Astrocyte of the cerebellum (primary cell): ENCODE measurements at regions of chr2 and their contacts with region 1.

Region 1: DNA sequence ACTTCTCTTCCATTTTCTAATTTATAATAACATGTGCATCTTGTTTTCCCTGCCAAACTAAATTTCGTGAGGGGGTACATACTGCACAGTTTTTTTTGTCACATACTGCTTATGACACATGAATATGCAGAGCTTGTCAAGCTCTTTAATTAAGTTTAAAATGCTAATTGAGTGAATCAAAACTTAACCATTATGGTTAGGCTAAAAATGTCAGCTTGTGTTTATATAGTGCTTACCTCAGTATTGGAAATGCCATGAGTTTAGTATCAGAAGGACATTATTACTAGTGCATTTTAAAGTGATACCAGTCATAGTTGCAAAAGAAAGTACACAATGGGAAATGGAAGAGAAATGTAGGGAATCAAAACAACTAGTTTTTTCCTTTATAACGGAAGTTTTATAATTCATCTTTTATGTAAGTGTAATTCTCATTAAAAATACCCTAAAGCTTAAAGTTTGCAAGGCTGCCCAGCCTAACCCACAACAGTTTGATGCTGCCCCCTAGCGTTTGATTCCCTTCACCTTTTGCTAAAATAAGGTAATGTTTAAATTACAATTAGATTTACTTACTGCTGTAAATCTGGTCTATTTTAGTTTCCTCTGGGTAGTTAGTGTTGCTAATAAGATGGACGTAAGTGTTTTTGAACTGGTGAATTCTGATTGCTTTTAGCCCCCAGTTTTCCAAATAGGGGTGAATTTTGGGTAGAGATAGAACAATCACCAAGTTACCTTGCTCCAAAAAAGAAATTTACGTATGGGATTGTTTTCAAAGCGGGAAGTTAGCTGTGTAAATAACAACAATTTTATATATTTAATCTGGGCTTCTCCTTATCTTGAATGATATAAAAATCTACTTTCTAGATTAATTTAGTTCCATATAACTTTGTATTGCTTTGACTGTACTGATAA is 3.2 kb downstream of the SLC39A10 start:
- DNase-seq: peak; percentile 78
- H3K4me3 ChIP-seq: peak overlapping the region; percentile 90
- CTCF ChIP-seq: peak; percentile 75

Region 2: DNA sequence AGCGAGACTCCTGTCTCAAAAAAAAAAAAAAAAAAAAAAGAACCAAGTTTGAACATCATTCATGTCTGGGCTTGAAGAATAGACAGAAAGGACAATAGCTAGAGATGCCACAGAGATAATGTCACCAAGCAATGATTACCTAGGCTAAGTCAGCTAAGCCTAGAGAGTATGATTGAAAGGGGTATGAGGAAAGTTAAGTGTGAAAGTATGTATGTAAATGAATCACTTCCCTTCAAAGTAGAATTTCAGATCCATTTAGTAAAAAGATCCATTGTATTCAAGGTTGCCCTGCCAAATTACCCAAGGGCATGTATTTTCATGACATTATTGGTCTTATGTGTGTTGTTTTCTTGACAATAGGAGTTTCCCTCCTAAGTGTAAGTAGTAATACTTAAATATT is 37.3 kb before region 1 on chr2:
- in situ Hi-C with region 1: no loop called
- DNase-seq: no peak
- H3K4me3 ChIP-seq: no peak overlapping the region
- CTCF ChIP-seq: no peak

Region 3: DNA sequence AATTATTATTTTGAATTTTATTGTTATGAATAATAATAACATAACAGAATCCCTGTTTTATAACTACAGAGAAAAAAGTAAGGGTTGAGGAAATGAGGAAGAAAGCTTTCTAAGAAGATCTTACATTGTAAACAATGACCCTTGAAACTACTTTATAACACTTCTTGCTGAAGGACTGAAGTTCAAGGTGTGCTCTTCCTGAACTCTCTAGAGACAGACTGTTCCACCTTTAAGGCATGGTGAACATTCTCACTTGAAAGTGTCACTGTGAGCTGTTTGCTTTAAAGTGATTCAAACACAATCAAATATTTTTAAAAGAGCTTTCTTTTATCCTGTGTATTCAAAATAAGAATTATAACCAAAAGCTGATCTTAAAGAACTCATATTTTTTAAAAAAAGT is 276.9 kb after region 1 on chr2:
- in situ Hi-C with region 1: loop called (anchors 5 kb)
- DNase-seq: no peak
- H3K4me3 ChIP-seq: no peak overlapping the region
- CTCF ChIP-seq: no peak